K562 (cell line): ENCODE measurements at regions of chr6 and their contacts with region 1.

Region 1: DNA sequence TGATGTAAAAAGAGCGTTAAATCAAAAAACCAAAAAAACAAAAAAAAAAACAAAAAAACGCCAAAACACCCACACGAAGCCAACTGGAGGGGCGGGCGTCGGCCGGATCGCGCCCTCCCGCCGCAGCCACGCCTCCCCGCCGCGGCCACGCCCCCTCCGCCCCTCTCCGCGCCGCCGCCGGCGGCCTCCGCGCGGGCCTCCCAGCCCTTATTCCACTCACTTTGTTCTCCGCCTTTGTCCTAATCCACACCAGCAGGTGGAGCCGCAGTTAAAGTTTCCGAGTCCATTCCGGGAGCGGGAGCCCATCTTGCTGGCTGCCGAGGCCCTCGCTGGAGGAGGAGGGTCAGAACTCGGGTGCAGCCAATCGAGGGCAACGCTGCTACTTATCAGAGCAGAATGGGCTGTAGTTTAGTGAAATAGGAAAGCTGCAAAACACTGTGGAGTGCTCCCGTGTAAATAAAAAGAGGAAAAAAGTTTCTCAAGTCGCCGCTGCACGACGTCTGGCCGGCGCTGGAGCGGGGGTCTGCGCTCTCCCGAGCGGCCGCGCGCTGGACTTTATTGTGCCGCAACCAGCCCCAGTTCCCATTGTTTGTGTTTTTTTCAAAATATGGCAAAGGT is at the start of gene ASF1A:
- DNase-seq: peak; percentile 90 to 99 (median 91)
- ATAC-seq: peak; percentile 86
- H3K4me3 ChIP-seq: peak within 1 kb of the TSS; percentile 72
- H3K27ac ChIP-seq: peak within 1 kb of the TSS; percentile 93
- H3K4me1 ChIP-seq: peaks cover 20 to 40% of the 10 kb centered on the region in 2 experiments
- H3K27me3 ChIP-seq: no peaks in the 10 kb centered on the region
- CTCF ChIP-seq: peak; percentile 73 to 86 (median 83)
- EP300 ChIP-seq: peak; percentile 53
- POLR2A ChIP-seq: peak; percentile 90
- RAD21 ChIP-seq: peak in 1 of 2 experiments; percentile 52; a peak in 2 of 4 replicates
- polyA plus RNA-seq, gene ASF1A: 32.1 to 34.8 TPM

Region 2: DNA sequence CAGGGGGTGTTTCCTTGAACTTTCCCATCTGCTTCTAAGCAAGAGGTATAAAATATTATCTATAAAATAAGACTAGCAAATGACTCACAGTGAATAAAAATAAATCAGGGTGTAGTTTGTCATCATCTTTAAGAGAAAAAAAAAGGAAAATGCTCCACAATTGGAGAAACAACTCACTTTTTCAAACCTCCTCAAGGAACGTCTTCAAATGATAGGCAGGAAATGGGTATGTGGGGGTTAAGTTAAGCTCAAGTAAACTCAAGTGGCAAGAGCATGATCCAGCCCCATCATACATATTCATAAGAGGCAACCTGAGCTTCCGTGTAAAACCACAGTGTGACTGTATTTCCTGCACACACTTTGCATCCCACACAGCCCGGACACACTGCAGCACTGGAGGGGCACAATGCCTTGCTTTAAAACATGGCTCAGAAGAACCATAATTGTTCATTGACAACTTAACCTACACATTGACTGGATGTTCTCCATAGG is 184.0 kb before region 1 on chr6:
- CTCF ChIA-PET with region 1: no interaction called
- POLR2A ChIA-PET with region 1: no interaction called
- in situ Hi-C with region 1: no loop called
- intact Hi-C with region 1: loop called (anchors 2 kb)
- DNase-seq: peak; percentile 39 to 92 (median 58)
- ATAC-seq: peak; percentile 87
- H3K4me3 ChIP-seq: peak overlapping the region; percentile 54
- H3K27ac ChIP-seq: peak overlapping the region; percentile 98
- H3K4me1 ChIP-seq: peaks cover 12 to 27% of the 10 kb centered on the region in 2 experiments
- H3K27me3 ChIP-seq: no peaks in the 10 kb centered on the region
- CTCF ChIP-seq: no peak
- EP300 ChIP-seq: peak; percentile 25; the same call in 1 of the 2 replicates
- POLR2A ChIP-seq: peak; percentile 85
- RAD21 ChIP-seq: no peak

Region 3: GRCh38 chr6:118881440-118882313 is 12.2 kb before region 1 on chr6:
- CTCF ChIA-PET with region 1: no interaction called
- POLR2A ChIA-PET with region 1: interaction called, 24 read pairs
- in situ Hi-C with region 1: no loop called
- intact Hi-C with region 1: no loop called
- DNase-seq: peak in 1 of 4 experiments; percentile 15
- ATAC-seq: peak; percentile 75
- H3K4me3 ChIP-seq: no peak overlapping the region
- H3K27ac ChIP-seq: no peak overlapping the region
- H3K4me1 ChIP-seq: peaks cover 0 to 15% of the 10 kb centered on the region in 2 experiments; a peak in 1 of 5 replicates
- H3K27me3 ChIP-seq: no peaks in the 10 kb centered on the region
- CTCF ChIP-seq: no peak
- EP300 ChIP-seq: no peak
- POLR2A ChIP-seq: no peak
- RAD21 ChIP-seq: no peak

Region 4: DNA sequence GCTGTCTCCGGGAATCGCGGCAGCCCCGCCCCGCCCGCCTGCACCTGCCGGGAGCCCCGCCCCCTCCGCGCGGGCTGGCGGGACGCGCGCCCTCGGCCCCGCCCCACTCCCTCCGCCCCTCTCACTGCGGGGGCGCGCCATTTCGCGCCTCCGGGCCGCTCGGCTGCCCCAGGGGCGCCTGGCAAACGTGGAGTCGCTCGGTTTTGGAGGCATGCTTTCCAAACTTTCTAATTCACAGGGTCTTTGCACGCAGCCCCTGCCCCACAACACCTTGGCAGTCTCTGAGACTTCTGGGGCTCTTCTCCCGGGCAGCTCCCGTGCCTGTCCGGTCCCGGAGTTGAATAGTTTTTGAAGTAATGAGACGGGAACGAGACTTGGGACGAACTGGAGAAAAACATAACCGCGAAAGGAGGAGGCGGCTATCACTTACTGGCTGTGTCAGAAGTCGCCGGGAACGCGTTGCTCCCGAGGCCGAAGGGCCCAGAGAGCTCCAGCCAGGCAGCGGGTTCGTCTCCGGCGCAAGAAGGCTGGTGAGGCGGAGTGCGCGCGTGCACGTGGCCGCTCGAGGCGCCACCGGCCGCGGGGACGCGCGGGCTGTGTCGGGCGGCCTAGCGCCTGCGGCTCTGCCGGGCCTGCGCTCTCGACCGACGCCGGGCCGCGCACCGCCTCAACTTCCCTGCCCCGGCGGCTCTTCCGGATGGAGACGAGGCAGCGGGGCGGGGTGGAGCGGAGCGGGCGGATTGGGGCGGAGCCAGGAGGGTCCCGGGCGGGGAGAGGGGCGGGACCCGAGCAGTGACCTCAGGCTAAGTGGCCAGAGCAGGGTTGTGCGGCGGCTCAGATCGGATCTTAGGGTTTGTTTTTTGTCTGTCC is 40.8 kb after region 1 on chr6 and contains the start of gene MCM9:
- CTCF ChIA-PET with region 1: no interaction called
- POLR2A ChIA-PET with region 1: interaction called, 5 read pairs
- in situ Hi-C with region 1: no loop called
- intact Hi-C with region 1: loop called (anchors 2 kb)
- DNase-seq: peak; percentile 96 to 97 (median 96)
- ATAC-seq: peak; percentile 98
- H3K4me3 ChIP-seq: peak within 1 kb of the TSS; percentile 75
- H3K27ac ChIP-seq: peak within 1 kb of the TSS; percentile 99
- H3K4me1 ChIP-seq: peaks cover 8 to 14% of the 10 kb centered on the region in 2 experiments; a peak in 4 of 5 replicates
- H3K27me3 ChIP-seq: no peaks in the 10 kb centered on the region
- CTCF ChIP-seq: no peak
- EP300 ChIP-seq: no peak; the same call in 1 of the 2 replicates
- POLR2A ChIP-seq: peak; percentile 90
- RAD21 ChIP-seq: no peak
- polyA plus RNA-seq, gene MCM9: 4.8 to 5.8 TPM

Region 5: GRCh38 chr6:119110601-119111548 is 217.0 kb after region 1 on chr6:
- CTCF ChIA-PET with region 1: no interaction called
- POLR2A ChIA-PET with region 1: no interaction called
- in situ Hi-C with region 1: no loop called
- intact Hi-C with region 1: loop called (anchors 1 kb)
- DNase-seq: peak; percentile 58 to 79 (median 64)
- ATAC-seq: peak; percentile 92
- H3K4me3 ChIP-seq: no peak overlapping the region
- H3K27ac ChIP-seq: no peak overlapping the region
- H3K4me1 ChIP-seq: peaks cover 3 to 16% of the 10 kb centered on the region in 2 experiments; a peak in 3 of 5 replicates
- H3K27me3 ChIP-seq: no peaks in the 10 kb centered on the region
- CTCF ChIP-seq: peak; percentile 68 to 86 (median 72)
- EP300 ChIP-seq: no peak
- POLR2A ChIP-seq: no peak
- RAD21 ChIP-seq: peak; percentile 97 to 98